BJ (cell line): ENCODE measurements at regions of chr9 and their contacts with region 1.

Region 1: DNA sequence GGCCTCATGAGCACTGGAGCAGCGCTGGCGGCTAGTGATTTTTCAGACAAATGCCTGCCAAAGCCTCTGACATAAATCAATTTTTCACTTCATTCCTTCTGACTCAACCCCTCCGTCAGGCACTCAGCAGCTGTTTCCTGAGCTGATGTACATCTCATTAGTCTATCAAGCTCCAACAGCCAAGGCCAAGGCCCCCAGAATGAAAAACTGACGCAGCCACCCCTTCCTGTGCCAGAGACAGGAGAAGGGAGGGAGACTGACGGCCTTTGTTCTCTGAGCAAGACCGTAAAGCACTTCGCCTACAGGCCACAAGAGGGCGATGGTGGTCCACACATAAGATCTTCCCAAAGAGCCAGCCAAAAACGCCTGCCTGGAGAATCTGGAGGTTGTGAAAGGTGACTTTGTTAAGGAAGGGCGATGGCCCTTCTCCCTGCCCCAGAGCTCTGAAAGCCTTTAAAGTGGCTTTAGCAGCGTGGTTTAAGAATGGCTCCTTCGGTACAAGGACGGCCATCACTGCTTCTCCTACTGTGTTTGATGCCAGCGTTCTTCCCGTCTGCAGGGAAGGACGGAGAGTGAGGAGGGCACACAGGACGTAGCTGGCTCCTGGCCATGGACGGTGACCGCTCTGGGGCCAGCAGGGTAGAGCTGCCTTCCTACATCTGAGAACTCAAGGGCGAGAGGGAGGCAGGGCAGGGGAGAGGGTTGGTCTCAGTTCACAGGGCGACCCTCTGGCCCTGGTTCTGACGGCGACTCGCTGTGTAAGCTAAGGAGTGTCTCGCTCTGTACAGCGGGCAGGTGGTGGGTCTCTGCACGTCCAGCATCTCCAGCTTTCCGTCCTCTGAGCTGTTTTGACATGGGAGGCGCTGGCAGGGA is 37.0 kb downstream of the ALG2 start:
- DNase-seq: peak; percentile 21
- H3K4me3 ChIP-seq: no peak overlapping the region
- H3K27me3 ChIP-seq: peaks cover 5% of the 10 kb centered on the region
- CTCF ChIP-seq: peak; percentile 90

Region 2: DNA sequence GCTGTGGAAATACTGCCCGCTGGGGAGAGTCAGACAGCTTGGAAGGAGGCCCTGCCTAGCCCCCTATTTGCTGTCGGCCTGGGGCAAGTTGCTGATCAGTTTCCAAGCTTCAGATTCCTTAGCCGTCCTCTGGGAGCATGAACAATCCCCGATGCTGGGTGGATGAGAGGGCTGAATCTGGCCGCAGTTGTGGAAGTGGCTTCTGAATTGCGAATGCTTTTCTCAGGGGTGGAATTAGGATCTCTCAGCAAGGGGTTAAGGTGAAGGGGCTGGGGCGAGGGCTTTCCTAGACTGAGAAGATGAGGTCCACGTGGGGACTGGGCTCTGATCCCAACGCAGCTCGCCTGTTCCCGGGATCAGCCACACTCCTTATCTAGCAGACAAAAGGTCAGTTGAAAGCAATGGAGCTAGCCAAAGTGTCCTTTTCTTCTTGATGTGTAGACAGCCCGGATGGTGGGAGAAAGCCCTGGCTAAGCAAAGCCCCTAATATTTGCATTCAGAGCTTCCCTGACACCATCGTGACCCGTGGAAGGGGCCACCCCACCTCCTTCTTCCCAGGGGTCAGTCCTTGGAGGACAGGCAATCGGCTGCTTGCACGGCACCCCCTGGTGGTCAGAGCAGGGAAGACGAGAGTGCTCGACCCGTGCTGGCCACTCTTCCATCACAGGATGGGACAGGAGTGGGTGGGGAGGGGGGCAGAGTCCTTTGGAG is 186.1 kb before region 1 on chr9:
- CTCF ChIA-PET with region 1: no interaction called
- POLR2A ChIA-PET with region 1: no interaction called
- DNase-seq: no peak
- H3K4me3 ChIP-seq: no peak overlapping the region
- H3K27me3 ChIP-seq: peaks cover 1% of the 10 kb centered on the region; the same call in 1 of the 2 replicates
- CTCF ChIP-seq: peak; percentile 93

Region 3: DNA sequence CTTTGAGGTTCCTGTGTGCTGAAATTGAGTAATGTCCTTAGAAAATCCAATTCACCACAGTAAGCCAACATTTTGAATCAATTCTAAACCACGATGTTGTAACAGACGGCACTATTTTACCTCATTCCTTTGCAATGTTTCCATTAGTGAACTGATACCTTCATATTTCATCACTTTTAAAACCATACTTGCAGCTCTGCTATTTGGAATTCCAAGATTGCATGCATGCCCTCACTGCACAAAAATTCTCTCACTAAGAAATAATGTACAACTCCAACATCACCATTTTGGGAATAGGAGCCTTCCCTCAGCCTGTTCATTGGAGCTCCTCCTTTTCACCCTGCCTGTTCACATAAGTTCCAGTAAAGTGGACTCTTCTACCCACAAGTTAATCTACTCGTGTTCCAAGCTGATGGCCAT is 154.6 kb before region 1 on chr9:
- CTCF ChIA-PET with region 1: no interaction called
- POLR2A ChIA-PET with region 1: no interaction called
- DNase-seq: peak; percentile 99
- H3K4me3 ChIP-seq: no peak overlapping the region
- H3K27me3 ChIP-seq: no peaks in the 10 kb centered on the region
- CTCF ChIP-seq: no peak

Region 4: DNA sequence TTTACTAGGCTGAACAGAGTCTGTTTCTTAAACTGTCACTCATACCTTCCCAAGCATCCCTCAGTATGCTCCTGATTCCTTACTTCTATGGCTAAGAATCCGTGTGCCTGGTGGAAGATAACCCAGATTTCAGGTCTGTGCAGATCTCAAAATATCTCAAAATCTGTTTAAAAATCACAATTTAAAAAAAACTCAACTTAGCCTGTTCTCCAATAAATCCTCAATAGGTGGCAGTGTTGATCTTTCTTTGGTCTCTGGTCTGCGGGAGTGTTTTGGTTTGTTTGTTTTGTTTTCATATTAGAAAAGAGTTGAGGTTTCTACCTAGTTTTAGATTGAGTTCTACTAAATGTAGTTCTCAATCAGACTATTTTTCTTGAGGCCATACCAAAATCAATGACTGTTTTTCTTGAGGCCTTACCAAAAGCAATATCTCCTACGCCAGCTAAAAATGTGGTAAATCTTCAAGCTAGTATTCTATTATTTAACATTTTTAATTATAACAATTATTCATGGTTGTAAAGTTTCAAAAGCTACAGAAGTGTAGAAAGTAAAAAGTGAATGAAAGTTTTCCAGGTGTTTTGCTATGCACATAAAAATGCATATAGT is 21.8 kb before region 1 on chr9:
- CTCF ChIA-PET with region 1: interaction called, 12 read pairs
- POLR2A ChIA-PET with region 1: no interaction called
- DNase-seq: no peak
- H3K4me3 ChIP-seq: no peak overlapping the region
- H3K27me3 ChIP-seq: no peaks in the 10 kb centered on the region
- CTCF ChIP-seq: peak; percentile 60

Region 5: GRCh38 chr9:99173570-99174504 is 10.9 kb before region 1 on chr9:
- CTCF ChIA-PET with region 1: interaction called, 16 read pairs
- POLR2A ChIA-PET with region 1: no interaction called
- DNase-seq: no peak
- H3K4me3 ChIP-seq: no peak overlapping the region
- H3K27me3 ChIP-seq: peaks cover 6% of the 10 kb centered on the region
- CTCF ChIP-seq: no peak